ENCODE measurements at regions of chr17 and their contacts with region 1.

Region 1: DNA sequence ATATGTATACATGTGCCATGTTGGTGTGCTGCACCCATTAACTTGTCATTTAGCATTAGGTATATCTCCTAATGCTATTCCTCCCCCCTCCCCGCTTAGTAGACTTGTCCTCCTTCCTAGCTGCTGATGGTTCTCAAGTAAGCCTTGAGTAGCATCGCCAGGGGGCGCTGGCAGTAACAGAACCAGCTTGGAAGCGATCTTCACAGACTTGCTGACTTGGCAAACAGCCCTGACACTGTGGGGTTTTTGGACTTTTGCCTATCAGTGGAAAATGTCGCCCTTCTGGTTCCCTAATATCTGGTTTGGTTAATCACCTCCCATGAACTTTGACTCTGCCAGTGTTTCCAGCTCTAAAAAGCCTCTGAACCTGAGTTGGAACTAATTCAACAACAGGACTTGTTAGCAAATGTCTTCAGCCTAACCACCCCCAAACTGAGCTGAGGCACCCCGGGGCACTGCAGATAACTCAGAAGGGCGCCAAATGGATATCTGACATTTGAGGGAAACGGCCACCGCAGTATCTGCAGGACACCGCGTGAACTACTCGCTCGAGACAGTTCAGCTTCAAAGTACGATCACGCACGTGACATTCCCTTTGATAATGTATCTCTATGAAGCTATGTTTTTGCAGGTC is 15.4 kb upstream of the SPATA32 start:
- DNase-seq: peak; percentile 56
- H3K4me3 ChIP-seq: no peak overlapping the region
- CTCF ChIP-seq: peak; percentile 90

Region 2: DNA sequence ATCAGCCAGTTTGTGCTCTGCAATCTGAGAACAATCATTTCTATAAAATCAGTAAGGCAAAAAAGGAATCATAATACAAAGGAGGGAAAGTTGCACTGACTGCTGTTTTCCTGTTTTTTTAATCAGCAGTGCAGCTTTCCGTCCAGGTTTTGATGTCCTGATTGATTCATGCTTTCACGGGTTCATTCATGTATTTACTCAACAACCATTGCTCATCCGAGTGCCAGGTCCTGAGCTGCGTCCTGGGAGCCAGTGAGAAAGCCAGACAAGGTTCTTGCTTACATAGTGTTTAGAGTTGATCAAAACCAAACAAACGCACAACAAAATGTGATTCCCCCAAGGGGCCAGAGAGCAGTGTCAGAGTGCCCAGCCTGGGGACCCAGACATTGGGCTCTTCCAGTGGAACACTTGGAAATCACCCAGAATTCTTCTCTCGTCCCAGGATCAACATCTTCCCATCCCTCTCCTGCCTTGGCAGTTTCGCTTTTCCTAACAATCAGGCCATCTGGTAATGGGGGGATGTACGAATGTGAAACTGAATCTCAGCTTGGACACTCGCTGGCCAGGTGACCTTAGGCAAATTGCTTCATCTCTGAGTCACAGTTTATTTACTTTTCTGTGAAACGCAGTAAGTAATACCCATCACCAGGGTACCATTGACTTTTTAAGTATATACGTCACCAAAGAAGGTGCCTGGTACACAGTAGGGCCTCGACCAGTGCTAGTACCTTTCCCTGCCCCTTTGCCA is 295.9 kb before region 1 on chr17:
- CTCF ChIA-PET with region 1: no interaction called
- POLR2A ChIA-PET with region 1: no interaction called
- DNase-seq: no peak
- H3K4me3 ChIP-seq: no peak overlapping the region
- CTCF ChIP-seq: no peak

Region 3: DNA sequence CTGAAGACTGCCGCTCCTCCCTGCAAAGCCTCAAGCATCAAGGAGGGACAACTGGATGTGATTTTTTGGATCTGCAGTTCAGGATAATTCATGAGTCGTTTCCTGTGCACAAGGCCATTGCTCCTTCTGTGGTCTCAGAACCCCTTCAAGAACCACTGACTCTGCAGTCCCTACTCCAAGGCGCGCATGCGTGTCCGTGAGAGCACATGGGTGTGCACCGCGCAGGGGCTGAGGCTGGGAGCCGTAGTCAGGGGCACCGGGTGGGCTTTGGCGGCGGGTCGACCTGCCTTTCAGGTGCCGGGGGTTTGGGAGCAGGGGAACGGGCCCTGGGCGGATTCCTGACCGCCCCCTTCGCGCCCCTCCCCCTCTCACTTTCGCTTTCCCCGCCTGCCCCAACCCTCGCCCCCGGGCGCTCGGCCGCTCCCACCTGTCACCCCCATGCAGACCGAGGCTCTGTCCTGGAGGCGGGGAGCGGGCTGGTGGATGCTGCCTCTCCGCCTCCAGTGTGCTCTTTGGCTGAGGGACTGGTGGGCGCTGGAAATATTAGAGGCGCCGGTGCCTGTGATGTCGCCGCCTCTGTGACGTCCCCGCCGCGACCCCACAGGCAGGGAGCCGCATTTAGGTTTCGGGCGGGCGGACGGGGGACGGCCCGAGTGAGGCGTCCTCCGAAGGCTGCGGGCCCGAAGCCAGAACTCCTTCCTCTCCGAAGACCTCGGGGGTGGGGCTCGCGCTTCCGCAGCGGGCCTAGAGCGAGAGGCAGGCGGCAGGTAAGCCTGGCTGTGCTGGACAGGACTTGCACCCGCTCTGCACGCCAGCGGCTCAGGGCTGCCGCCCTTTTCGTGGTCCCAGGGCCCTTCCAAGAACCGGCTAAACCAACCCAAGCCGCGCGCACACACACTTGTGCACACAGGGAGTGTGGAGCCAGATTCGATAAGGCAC is 15.5 kb before region 1 on chr17 and contains the start of gene SPATA32:
- CTCF ChIA-PET with region 1: interaction called, 75 read pairs
- POLR2A ChIA-PET with region 1: no interaction called
- DNase-seq: no peak
- H3K4me3 ChIP-seq: peak within 1 kb of the TSS; percentile 23
- CTCF ChIP-seq: no peak

Region 4: GRCh38 chr17:45299339-45299738 is 22.0 kb after region 1 on chr17:
- CTCF ChIA-PET with region 1: interaction called, 144 read pairs
- POLR2A ChIA-PET with region 1: interaction called, 3 read pairs
- DNase-seq: no peak
- H3K4me3 ChIP-seq: no peak overlapping the region
- CTCF ChIP-seq: no peak

Region 5: GRCh38 chr17:45317112-45317928 is 40.0 kb after region 1 on chr17:
- CTCF ChIA-PET with region 1: interaction called, 29 read pairs
- POLR2A ChIA-PET with region 1: no interaction called
- DNase-seq: peak; percentile 100
- H3K4me3 ChIP-seq: peak overlapping the region; percentile 57
- CTCF ChIP-seq: no peak

Region 6: DNA sequence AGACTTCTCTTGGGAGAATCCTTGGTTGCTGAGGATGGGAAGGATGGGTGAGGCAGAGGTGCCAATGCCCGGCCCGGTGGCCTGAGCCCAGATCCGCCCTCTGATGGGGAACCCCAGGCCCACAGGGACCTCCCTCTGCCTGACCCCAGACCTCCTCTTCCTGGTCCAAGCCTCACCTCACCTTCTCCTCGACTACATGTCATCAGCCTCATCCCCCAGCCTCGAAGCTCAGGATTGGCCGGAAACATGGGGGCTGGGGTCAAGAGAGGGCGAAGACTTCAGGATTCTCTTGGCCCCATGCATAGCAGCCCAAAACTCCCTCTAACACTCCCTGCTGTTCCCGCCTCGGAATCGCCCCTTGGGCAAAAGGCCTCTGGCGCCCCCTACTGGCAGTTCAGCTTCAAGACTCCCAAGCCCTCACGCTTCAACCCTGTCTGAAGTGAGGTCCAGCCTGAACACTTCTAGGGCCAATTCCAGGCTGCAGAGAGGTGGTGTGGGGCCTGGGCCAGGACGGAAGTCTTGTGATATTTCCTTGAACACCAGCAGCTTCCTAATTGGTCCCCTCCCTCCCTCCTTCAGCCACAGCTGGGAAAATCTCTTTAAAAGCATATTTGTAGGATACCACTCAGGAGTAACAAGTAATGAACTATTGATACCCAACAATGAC is 108.1 kb after region 1 on chr17:
- CTCF ChIA-PET with region 1: interaction called, 828 read pairs
- POLR2A ChIA-PET with region 1: interaction called, 3 read pairs
- DNase-seq: no peak
- H3K4me3 ChIP-seq: no peak overlapping the region
- CTCF ChIP-seq: peak; percentile 96